IMR-90 (cell line): ENCODE measurements at regions of chr9 and their contacts with region 1.

Region 1: GRCh38 chr9:131678499-131679111 is 61.3 kb downstream of the RAPGEF1 start:
- DNase-seq: peak; percentile 98
- ATAC-seq: peak; percentile 91
- H3K4me3 ChIP-seq: no peak overlapping the region
- H3K27ac ChIP-seq: peak overlapping the region; percentile 77
- H3K4me1 ChIP-seq: peaks cover 28% of the 10 kb centered on the region
- H3K27me3 ChIP-seq: no peaks in the 10 kb centered on the region
- CTCF ChIP-seq: no peak
- POLR2A ChIP-seq: peak; percentile 24; the same call in 1 of the 2 replicates
- RAD21 ChIP-seq: 0 out of 2 replicates have a peak, but pooled peaks have one; percentile 25

Region 2: GRCh38 chr9:130912932-130913598 is 765.5 kb before region 1 on chr9:
- CTCF ChIA-PET with region 1: no interaction called
- POLR2A ChIA-PET with region 1: no interaction called
- dilution Hi-C with region 1: no loop called
- in situ Hi-C with region 1: no loop called
- intact Hi-C with region 1: no loop called
- DNase-seq: peak; percentile 78
- ATAC-seq: peak; percentile 84
- H3K4me3 ChIP-seq: no peak overlapping the region
- H3K27ac ChIP-seq: peak overlapping the region; percentile 43; the same call in 1 of the 2 replicates
- H3K4me1 ChIP-seq: peaks cover 6% of the 10 kb centered on the region
- H3K27me3 ChIP-seq: no peaks in the 10 kb centered on the region
- CTCF ChIP-seq: no peak
- POLR2A ChIP-seq: no peak
- RAD21 ChIP-seq: no peak

Region 3: GRCh38 chr9:131608493-131609037 is 70.0 kb before region 1 on chr9:
- CTCF ChIA-PET with region 1: interaction called, 3 read pairs
- POLR2A ChIA-PET with region 1: no interaction called
- dilution Hi-C with region 1: no loop called
- in situ Hi-C with region 1: no loop called
- intact Hi-C with region 1: loop called (anchors 2 kb)
- DNase-seq: peak; percentile 87
- ATAC-seq: peak; percentile 88
- H3K4me3 ChIP-seq: peak overlapping the region; percentile 8; the same call in 1 of the 2 replicates
- H3K27ac ChIP-seq: peak overlapping the region; percentile 78
- H3K4me1 ChIP-seq: peaks cover 35% of the 10 kb centered on the region
- H3K27me3 ChIP-seq: no peaks in the 10 kb centered on the region
- CTCF ChIP-seq: 0 out of 2 replicates have a peak, but pooled peaks have one; percentile 3
- POLR2A ChIP-seq: no peak
- RAD21 ChIP-seq: peak; percentile 18; the same call in 1 of the 2 replicates

Region 4: DNA sequence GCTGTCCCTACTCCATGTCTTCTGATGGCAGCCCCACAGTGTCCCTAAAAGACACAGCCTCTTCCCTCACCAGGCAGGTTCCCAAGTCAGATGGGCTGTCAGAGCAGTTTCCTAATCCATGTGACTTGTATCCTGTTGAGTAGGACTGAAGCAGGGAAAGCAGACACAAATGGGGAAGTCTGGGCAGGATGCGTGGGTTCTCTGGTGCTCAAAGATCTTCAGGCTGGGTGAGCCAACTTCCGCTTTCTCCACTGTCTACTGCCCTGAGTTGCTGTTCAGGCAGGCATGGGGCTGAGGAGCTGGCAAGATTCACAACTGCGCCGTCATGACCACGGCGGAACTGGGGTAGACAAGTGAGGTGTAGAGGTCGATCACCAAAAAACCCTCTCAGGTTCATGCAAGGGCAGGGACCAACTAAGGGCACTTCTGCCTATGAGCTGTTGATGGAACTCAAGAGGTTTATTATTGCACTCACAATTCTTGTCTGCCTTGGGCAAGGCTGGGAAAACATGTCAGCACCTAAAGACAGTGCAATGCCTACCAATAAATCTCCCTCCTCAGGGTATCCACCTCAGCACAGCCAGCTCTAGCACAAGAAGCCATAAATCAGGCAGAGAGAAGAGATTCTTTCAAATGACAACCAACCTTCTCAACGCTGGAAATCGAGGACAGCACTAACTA is 22.1 kb before region 1 on chr9:
- CTCF ChIA-PET with region 1: interaction called, 4 read pairs
- POLR2A ChIA-PET with region 1: no interaction called
- dilution Hi-C with region 1: no loop called
- in situ Hi-C with region 1: no loop called
- intact Hi-C with region 1: loop called (anchors 1 kb)
- DNase-seq: no peak
- ATAC-seq: no peak
- H3K4me3 ChIP-seq: no peak overlapping the region
- H3K27ac ChIP-seq: peak overlapping the region; percentile 97; the same call in 1 of the 2 replicates
- H3K4me1 ChIP-seq: peaks cover 32% of the 10 kb centered on the region
- H3K27me3 ChIP-seq: no peaks in the 10 kb centered on the region
- CTCF ChIP-seq: no peak
- POLR2A ChIP-seq: no peak
- RAD21 ChIP-seq: no peak

Region 5: GRCh38 chr9:131733541-131734061 is 55.0 kb after region 1 on chr9:
- CTCF ChIA-PET with region 1: no interaction called
- POLR2A ChIA-PET with region 1: no interaction called
- dilution Hi-C with region 1: no loop called
- in situ Hi-C with region 1: no loop called
- intact Hi-C with region 1: loop called (anchors 5 kb)
- DNase-seq: peak; percentile 96
- ATAC-seq: peak; percentile 85
- H3K4me3 ChIP-seq: no peak overlapping the region
- H3K27ac ChIP-seq: peak overlapping the region; percentile 18; the same call in 1 of the 2 replicates
- H3K4me1 ChIP-seq: peaks cover 40% of the 10 kb centered on the region
- H3K27me3 ChIP-seq: no peaks in the 10 kb centered on the region
- CTCF ChIP-seq: no peak
- POLR2A ChIP-seq: no peak; the same call in 1 of the 2 replicates
- RAD21 ChIP-seq: peak; percentile 13; the same call in 1 of the 2 replicates

Region 6: GRCh38 chr9:131755541-131756198 is 77.1 kb after region 1 on chr9:
- CTCF ChIA-PET with region 1: interaction called, 12 read pairs
- POLR2A ChIA-PET with region 1: no interaction called
- dilution Hi-C with region 1: no loop called
- in situ Hi-C with region 1: no loop called
- intact Hi-C with region 1: no loop called
- DNase-seq: peak; percentile 73
- ATAC-seq: peak; percentile 99
- H3K4me3 ChIP-seq: no peak overlapping the region
- H3K27ac ChIP-seq: no peak overlapping the region
- H3K4me1 ChIP-seq: no peaks in the 10 kb centered on the region
- H3K27me3 ChIP-seq: peaks cover 30% of the 10 kb centered on the region
- CTCF ChIP-seq: peak; percentile 81
- POLR2A ChIP-seq: no peak
- RAD21 ChIP-seq: peak; percentile 67